Activated CD8-positive, alpha-beta T cell treated with anti-CD3 and anti-CD28 coated beads for 36 hours (primary cell): ENCODE measurements at regions of chr1 and their contacts with region 1.

Region 1: GRCh38 chr1:160997323-160998038 is 23.5 kb downstream of the F11R start:
- DNase-seq: peak; percentile 72
- ATAC-seq: peak; percentile 84
- H3K4me3 Mint-ChIP-seq: no peak overlapping the region
- H3K27ac Mint-ChIP-seq: peak overlapping the region; percentile 73
- H3K4me1 Mint-ChIP-seq: peaks cover 21% of the 10 kb centered on the region
- H3K27me3 Mint-ChIP-seq: no peaks in the 10 kb centered on the region
- CTCF ChIP-seq: peak; percentile 57

Region 2: GRCh38 chr1:160907976-160908375 is 89.5 kb before region 1 on chr1:
- CTCF ChIA-PET with region 1: no interaction called
- POLR2A ChIA-PET with region 1: no interaction called
- intact Hi-C with region 1: no loop called
- DNase-seq: no peak
- ATAC-seq: no peak
- H3K4me3 Mint-ChIP-seq: no peak overlapping the region
- H3K27ac Mint-ChIP-seq: no peak overlapping the region
- H3K4me1 Mint-ChIP-seq: no peaks in the 10 kb centered on the region
- H3K27me3 Mint-ChIP-seq: no peaks in the 10 kb centered on the region
- CTCF ChIP-seq: no peak

Region 3: GRCh38 chr1:161012420-161012819 is 14.9 kb after region 1 on chr1:
- CTCF ChIA-PET with region 1: interaction called, 10 read pairs
- POLR2A ChIA-PET with region 1: interaction called, 4 read pairs
- intact Hi-C with region 1: no loop called
- DNase-seq: no peak
- ATAC-seq: no peak
- H3K4me3 Mint-ChIP-seq: no peak overlapping the region
- H3K27ac Mint-ChIP-seq: no peak overlapping the region
- H3K4me1 Mint-ChIP-seq: peaks cover 30% of the 10 kb centered on the region
- H3K27me3 Mint-ChIP-seq: no peaks in the 10 kb centered on the region
- CTCF ChIP-seq: no peak

Region 4: DNA sequence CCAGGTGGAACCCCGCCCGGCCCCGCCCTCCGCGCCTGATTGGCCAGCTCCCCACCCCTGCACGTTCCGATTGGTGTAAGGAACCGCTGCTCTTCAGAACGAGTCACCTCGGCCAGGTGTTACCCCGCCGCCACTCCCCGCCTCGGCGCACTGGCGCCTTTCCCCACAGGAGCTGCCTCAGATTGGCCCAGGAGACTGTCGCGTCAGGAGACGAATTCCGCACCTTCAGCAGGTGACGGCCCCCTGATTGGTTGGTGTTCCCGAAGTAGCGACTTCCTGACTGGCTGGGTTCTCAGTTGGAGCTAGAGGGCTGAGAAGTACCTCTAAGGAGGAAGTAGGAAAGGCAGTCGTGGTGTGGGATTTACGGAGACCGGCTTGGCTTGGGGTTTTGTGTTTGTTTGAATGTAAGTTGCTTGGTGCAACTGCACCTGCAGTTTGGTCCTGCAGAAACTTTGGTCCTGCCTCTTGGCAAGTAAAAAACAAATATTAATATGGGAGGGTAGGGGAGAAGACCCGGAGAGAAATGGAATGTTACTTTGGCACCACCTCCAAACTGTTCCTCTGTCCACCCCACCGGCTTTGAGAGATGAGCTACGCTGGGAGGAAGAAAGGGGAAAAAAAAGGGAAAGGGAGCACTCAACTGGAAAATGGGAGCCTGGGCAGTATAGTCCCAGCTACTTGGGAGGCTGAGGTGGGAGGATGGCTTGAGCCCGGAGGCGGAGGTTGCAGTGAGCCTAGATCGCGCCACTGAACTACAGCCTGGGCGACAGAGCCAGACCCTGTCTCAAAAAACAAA is 23.9 kb after region 1 on chr1:
- CTCF ChIA-PET with region 1: interaction called, 10 read pairs
- POLR2A ChIA-PET with region 1: interaction called, 4 read pairs
- intact Hi-C with region 1: no loop called
- DNase-seq: peak; percentile 90
- ATAC-seq: peak; percentile 95
- H3K4me3 Mint-ChIP-seq: peak overlapping the region; percentile 87
- H3K27ac Mint-ChIP-seq: peak overlapping the region; percentile 81
- H3K4me1 Mint-ChIP-seq: peaks cover 39% of the 10 kb centered on the region
- H3K27me3 Mint-ChIP-seq: no peaks in the 10 kb centered on the region
- CTCF ChIP-seq: no peak

Region 5: GRCh38 chr1:161038523-161039153 is 41.2 kb after region 1 on chr1 and contains the start of gene TSTD1:
- CTCF ChIA-PET with region 1: interaction called, 20 read pairs
- POLR2A ChIA-PET with region 1: no interaction called
- intact Hi-C with region 1: loop called (anchors 5 kb)
- DNase-seq: peak; percentile 93
- ATAC-seq: peak; percentile 85
- H3K4me3 Mint-ChIP-seq: peak within 1 kb of the TSS; percentile 91
- H3K27ac Mint-ChIP-seq: peak within 1 kb of the TSS; percentile 96
- H3K4me1 Mint-ChIP-seq: peaks cover 61% of the 10 kb centered on the region
- H3K27me3 Mint-ChIP-seq: no peaks in the 10 kb centered on the region
- CTCF ChIP-seq: no peak
- total RNA-seq, gene TSTD1: 70.8 to 78.7 TPM

Region 6: DNA sequence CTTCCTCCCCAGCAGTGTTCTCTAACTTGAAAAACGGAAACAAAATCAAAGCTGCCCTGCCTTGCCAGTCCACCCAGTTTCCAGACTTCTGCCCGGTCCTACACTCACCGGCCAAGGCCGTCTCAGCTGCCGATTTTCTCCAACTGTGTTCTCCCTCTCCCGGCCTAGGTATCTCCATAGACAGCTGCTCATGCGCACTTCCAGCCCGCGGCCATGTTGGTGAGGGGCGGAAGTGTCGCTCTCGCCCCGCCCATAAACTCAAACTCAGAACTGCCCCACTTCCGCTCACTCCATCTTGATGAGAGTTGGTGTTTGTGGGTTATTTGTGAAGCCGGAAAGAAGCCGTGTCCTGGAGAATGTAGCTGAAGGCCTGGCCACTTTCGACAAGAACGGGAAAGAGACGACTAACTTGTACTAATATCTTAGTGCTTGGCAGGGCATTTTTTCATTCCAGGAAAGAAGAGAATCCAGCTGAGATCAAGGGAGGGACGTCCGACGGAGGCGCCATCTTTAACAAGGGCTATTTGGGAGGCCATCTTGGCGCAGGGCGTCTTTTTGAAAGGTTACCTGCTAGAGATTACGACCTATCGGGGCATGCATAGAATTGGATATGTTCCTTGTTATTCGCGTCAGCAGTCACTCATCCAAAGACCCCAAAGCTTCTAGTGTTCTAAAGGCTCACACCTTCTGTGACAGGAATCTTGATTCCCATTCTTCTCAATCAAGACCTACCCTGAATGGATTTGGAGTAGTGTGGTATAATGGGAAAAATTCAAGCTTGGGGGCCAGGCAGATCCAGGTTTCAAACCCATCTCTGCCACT is 48.5 kb after region 1 on chr1 and contains the start of gene USF1:
- CTCF ChIA-PET with region 1: interaction called, 20 read pairs
- POLR2A ChIA-PET with region 1: no interaction called
- intact Hi-C with region 1: loop called (anchors 5 kb)
- DNase-seq: peak; percentile 96
- ATAC-seq: peak; percentile 83
- H3K4me3 Mint-ChIP-seq: peak within 1 kb of the TSS; percentile 84
- H3K27ac Mint-ChIP-seq: peak within 1 kb of the TSS; percentile 98
- H3K4me1 Mint-ChIP-seq: peaks cover 36% of the 10 kb centered on the region
- H3K27me3 Mint-ChIP-seq: no peaks in the 10 kb centered on the region
- CTCF ChIP-seq: no peak
- total RNA-seq, gene USF1: 50.0 to 52.1 TPM

Region 7: DNA sequence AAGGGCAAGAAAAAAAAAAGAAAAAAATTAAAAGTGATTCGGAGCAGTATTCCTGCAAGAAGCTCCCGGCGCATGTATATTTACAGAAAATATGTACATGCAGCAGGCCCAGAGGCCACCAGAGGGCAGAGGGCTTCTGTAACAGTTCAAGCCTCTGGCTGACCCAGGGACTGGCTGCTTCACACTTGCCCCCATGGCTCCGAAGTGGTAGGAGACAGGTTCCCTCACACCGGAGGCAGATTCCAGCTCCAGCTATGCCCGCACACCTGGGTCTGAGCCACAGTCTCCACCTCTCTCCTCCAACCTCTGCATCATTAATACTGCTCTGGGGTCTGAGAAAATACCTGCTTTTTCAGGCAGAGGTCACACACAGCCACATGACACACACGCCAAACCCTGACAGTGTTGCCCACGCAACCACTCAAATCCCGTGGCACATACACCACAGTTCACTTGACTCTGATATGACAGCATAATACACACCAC is 74.4 kb after region 1 on chr1:
- CTCF ChIA-PET with region 1: interaction called, 18 read pairs
- POLR2A ChIA-PET with region 1: no interaction called
- intact Hi-C with region 1: no loop called
- DNase-seq: peak; percentile 81
- ATAC-seq: no peak
- H3K4me3 Mint-ChIP-seq: no peak overlapping the region
- H3K27ac Mint-ChIP-seq: peak overlapping the region; percentile 30
- H3K4me1 Mint-ChIP-seq: peaks cover 34% of the 10 kb centered on the region
- H3K27me3 Mint-ChIP-seq: no peaks in the 10 kb centered on the region
- CTCF ChIP-seq: peak; percentile 81

Region 8: GRCh38 chr1:161139765-161140164 is 142.3 kb after region 1 on chr1:
- CTCF ChIA-PET with region 1: interaction called, 13 read pairs
- POLR2A ChIA-PET with region 1: no interaction called
- intact Hi-C with region 1: no loop called
- DNase-seq: peak; percentile 65
- ATAC-seq: no peak
- H3K4me3 Mint-ChIP-seq: no peak overlapping the region
- H3K27ac Mint-ChIP-seq: no peak overlapping the region
- H3K4me1 Mint-ChIP-seq: peaks cover 6% of the 10 kb centered on the region
- H3K27me3 Mint-ChIP-seq: no peaks in the 10 kb centered on the region
- CTCF ChIP-seq: peak; percentile 74